Calu3 (cell line): ENCODE measurements at regions of chr4 and their contacts with region 1.

Region 1: DNA sequence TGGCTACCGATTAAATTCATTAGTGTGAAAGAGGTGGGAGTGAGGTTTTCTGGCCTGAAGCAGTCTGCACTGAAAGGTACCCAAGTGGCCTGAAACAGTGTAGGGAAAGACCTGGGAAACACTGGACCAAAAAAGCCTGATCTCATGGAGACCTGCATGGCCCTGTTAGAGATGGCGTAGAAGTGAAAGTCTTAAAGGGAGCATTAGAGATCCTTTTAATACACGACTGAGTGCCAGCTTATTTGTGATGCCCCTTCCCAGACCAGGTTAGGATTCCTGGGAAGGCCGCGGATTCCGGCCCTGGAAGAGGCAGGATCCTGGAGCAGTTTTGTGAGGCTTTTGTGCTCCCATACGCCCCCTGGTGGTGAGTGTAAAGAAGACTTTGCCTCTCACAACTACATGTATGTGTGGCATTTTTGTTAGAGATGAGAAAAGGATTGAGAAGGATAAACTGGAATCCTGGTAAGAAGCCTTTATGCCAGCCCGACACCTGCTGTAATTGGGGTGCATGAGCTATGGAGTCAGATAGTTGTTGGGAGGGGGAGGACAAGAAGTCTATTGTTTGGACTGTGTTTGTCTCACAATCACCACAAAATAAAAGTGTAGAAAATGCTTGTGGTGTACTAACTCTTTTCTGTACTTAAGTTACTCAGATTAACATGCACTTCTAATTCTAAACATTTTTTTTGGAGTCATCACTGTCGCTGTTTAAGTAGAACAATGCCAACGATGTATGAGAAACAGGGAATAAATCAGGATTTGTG is 54.0 kb downstream of the JADE1 start:
- DNase-seq: peak; percentile 74
- H3K4me3 Mint-ChIP-seq: no peak overlapping the region
- H3K27ac Mint-ChIP-seq: no peak overlapping the region
- H3K4me1 Mint-ChIP-seq: no peaks in the 10 kb centered on the region
- H3K27me3 Mint-ChIP-seq: no peaks in the 10 kb centered on the region
- CTCF ChIP-seq: peak; percentile 63

Region 2: DNA sequence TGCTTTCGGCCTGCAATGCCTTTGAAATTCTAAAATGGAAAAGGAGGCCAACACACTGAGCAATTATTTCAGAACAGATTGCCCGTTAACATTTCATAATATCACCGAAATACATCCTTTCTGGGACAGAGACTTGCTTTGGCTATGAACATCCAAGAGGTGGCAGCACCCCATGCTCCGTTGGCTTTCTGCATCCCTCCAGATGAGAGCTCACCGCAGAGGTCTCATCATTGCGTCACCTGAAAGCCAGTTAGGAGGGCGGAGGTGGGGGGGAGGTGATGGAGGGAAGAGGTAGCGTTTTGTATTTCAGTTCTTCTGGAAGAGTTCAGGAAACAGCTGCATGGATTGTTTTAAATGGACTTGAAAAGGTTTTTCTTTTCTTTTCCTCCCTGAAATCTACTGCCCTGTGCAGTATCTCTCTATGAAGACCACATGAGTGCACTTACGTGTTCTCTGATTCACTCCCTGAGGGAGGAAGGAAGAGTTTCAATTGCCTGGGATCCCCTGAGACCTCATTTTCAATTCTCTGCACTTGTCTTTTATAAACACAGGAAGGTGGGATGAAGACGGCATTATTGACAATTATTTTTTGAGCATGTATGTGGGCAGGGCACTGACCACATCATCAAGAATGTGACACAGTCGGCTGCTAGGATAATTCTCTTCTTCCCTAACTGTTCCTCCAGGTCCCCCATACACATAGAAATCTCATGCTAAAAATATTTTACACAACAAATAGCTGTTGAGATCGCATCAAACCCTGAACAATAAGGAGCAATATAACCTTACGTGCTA is 409.0 kb before region 1 on chr4:
- CTCF ChIA-PET with region 1: no interaction called
- intact Hi-C with region 1: loop called (anchors 10 kb)
- DNase-seq: peak; percentile 68
- H3K4me3 Mint-ChIP-seq: no peak overlapping the region
- H3K27ac Mint-ChIP-seq: no peak overlapping the region
- H3K4me1 Mint-ChIP-seq: no peaks in the 10 kb centered on the region
- H3K27me3 Mint-ChIP-seq: no peaks in the 10 kb centered on the region
- CTCF ChIP-seq: peak; percentile 62

Region 3: DNA sequence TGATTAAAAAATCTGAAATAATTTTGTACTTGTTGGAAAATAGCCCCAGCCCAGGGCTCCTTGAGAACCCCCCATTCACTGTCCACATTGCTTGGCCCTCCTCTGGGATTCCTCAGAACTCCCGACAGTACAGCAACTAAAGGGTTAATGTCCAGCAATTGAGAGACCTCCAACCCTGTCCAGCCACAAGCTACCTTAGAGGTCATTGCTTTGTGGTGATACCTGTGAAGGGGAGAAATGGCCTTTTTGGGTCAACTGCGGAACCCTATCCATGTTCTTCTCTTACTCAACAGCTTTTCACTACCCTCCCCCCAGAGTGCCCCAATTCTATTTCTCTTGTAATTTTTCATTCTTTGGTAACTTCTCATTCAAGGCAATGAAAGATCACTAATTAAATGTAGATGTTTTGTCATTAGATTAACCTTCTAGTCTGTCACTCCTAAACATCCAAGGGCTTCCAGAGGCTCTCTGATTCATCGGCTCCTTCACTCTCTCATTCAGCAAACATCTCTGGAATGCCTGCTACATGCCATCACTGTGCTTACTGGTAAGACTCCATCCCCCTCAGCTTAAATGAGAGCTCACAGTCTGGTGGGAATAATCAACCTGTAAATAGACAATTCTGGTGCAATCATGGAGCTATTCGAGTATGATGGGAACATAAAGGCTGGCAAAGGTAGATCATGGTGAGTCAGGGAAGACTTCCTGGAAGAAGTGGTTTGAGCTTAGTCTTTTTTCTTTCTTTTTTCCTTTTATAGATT is 334.5 kb before region 1 on chr4:
- CTCF ChIA-PET with region 1: no interaction called
- intact Hi-C with region 1: no loop called
- DNase-seq: peak; percentile 55
- H3K4me3 Mint-ChIP-seq: peak overlapping the region; percentile 38
- H3K27ac Mint-ChIP-seq: peak overlapping the region; percentile 71
- H3K4me1 Mint-ChIP-seq: peaks cover 25% of the 10 kb centered on the region
- H3K27me3 Mint-ChIP-seq: no peaks in the 10 kb centered on the region
- CTCF ChIP-seq: no peak

Region 4: DNA sequence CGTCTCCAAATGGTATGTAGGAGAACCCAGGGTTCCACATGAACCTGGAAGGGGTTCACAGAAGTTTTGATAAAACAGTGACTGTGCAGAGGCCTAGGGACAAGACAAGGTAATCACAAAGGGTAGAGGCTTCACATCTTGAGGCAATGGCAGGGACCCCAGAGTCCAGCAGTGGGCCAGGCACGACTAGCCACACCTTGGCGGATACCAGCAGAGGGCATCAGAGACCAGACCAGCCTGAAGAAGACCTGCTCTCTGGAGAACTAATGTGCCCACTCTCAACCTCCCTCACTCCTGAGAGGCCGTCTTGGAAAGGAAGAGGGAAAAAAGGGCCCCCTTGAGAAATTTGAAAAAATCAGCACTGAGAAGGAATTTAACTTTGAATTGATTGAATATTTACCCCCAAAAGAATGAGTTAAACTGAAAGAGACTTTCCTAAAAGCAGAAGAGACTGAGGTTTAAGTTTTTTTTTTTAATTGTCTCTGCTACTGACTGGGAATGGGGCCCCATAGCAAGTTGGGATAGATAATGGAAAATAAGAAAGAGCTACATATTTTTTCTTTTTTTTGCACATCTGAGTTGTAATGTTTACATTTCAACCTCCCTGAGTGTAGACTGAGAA is 297.8 kb before region 1 on chr4:
- CTCF ChIA-PET with region 1: interaction called, 6 read pairs
- intact Hi-C with region 1: loop called (anchors 1 kb)
- DNase-seq: peak; percentile 75
- H3K4me3 Mint-ChIP-seq: no peak overlapping the region
- H3K27ac Mint-ChIP-seq: no peak overlapping the region
- H3K4me1 Mint-ChIP-seq: peaks cover 41% of the 10 kb centered on the region
- H3K27me3 Mint-ChIP-seq: no peaks in the 10 kb centered on the region
- CTCF ChIP-seq: peak; percentile 49

Region 5: GRCh38 chr4:128809477-128810330 is 53.8 kb before region 1 on chr4 and contains the start of gene JADE1:
- CTCF ChIA-PET with region 1: no interaction called
- intact Hi-C with region 1: loop called (anchors 5 kb)
- DNase-seq: peak; percentile 87
- H3K4me3 Mint-ChIP-seq: peak within 1 kb of the TSS; percentile 81
- H3K27ac Mint-ChIP-seq: peak within 1 kb of the TSS; percentile 92
- H3K4me1 Mint-ChIP-seq: peaks cover 8% of the 10 kb centered on the region
- H3K27me3 Mint-ChIP-seq: no peaks in the 10 kb centered on the region
- CTCF ChIP-seq: no peak
- total RNA-seq, gene JADE1: 29.9 and 33.9 TPM in 2 replicates